Activated naive CD8-positive, alpha-beta T cell treated with anti-CD3 and anti-CD28 coated beads, Interleukin-2, amount 10 ng/mL, durations not matched to agents 7 days and 5 days (primary cell): ENCODE measurements at regions of chr10 and their contacts with region 1.

Region 1: GRCh38 chr10:88880282-88881076 is 434 bp downstream of the STAMBPL1 start:
- DNase-seq: peak; percentile 86
- ATAC-seq: peak; percentile 76
- H3K4me3 Mint-ChIP-seq: peak overlapping the region; percentile 94
- H3K27ac Mint-ChIP-seq: peak overlapping the region; percentile 92
- H3K4me1 Mint-ChIP-seq: peaks cover 50% of the 10 kb centered on the region
- H3K27me3 Mint-ChIP-seq: no peaks in the 10 kb centered on the region

Region 2: DNA sequence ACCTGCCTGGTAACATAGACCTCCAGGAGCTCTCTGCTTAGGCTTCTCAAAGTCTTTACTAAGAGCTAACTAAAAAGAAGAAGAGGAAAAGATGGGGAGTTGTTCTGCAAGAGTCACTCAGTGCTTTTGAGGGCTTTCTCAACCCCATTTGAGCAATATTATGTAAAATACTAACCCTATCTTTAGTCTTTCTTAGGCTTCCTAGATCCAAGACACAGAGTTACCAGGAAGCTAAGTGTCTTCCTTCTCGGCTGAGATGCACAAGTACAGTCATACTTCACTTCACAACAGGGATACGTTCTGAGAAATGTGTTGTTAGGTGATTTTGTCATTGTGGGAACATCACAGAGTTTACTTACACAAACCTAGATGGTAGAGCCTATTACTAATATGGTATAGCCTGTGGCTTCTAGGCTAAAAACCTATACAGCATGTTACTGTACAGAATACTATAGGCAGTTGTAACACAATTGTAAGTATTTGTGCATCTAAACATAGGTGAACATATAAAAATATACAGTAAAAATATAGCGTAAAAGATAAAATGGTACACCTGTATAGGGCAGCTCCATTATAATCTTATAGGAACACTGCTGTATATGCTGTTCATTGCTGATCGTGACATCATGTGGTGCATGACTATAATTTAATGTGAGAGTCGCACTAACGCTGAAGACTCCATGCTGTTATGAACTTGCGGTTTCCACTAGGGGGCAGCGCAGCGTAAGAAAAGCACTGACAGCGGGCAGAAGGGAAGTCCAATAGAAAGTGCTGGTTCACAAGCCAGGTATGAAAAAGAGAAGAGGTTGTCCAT is 45.2 kb before region 1 on chr10:
- POLR2A ChIA-PET with region 1: interaction called, 12 read pairs
- DNase-seq: peak; percentile 84
- ATAC-seq: peak; percentile 88
- H3K4me3 Mint-ChIP-seq: no peak overlapping the region
- H3K27ac Mint-ChIP-seq: no peak overlapping the region
- H3K4me1 Mint-ChIP-seq: peaks cover 32% of the 10 kb centered on the region
- H3K27me3 Mint-ChIP-seq: no peaks in the 10 kb centered on the region

Region 3: DNA sequence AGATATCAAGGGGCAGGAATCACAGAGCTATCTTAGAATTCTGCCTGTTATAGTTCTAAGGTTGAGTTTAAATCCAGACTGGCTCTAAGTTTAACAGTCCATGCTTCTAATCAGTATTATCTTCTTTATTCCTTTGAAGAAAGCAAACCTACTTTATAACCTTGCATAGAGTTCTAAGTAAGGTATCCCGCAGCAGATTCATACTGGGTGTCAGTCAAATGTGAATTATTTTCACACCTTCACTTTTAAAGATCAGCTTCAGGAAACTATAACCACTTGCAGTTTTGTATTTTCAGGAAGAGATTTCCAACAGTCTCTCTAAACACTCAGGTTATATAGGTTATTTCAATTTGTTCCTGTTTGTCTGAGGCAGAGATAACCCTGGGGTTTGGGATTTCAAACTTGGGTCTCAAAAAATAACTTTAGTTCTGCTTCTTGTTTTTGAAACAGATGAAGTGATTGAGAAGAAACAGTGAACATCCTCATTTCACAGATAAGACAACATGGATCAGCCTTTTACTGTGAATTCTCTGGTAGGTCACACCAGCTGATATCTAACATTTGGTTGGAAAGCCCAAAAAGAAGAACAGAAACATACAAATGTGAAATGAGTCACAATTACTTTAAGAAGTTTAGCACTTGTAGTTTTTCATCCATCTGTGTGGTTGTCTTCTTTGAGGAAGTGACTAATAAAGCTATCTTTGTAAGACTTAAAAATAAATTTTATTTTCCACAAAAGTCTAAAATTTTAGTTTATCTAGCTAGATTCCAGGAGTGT is 20.9 kb after region 1 on chr10:
- POLR2A ChIA-PET with region 1: interaction called, 18 read pairs
- DNase-seq: no peak
- ATAC-seq: peak; percentile 39
- H3K4me3 Mint-ChIP-seq: peak overlapping the region; percentile 33
- H3K27ac Mint-ChIP-seq: peak overlapping the region; percentile 60
- H3K4me1 Mint-ChIP-seq: peaks cover 39% of the 10 kb centered on the region
- H3K27me3 Mint-ChIP-seq: no peaks in the 10 kb centered on the region